ENCODE measurements at regions of chr14 and their contacts with region 1.

Region 1: DNA sequence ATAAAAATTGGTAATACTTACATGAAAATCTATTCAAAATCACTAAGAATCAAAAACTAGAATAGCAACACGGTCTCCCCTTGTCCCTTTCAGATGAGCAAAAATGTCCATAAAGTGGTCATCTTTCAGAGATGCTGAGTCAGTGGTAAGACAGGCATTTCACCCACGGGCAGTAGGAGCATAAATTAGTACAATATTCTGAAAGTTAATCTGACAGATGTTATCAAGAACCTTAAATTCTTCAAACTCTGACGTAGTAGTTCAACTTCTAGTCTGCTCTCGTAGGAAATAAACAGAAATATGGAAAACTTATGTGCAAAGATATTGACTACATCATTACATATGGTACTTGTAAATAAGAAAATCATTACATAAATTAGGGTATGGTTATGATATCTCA is 33.1 kb upstream of the GNPNAT1 start:
- DNase-seq: no peak
- ATAC-seq: no peak
- H3K4me3 ChIP-seq: no peak overlapping the region
- H3K4me3 Mint-ChIP-seq: no peak overlapping the region
- H3K27ac ChIP-seq: no peak overlapping the region
- H3K27ac Mint-ChIP-seq: no peak overlapping the region
- H3K4me1 ChIP-seq: no peaks in the 10 kb centered on the region
- H3K4me1 Mint-ChIP-seq: no peaks in the 10 kb centered on the region
- H3K27me3 ChIP-seq: no peaks in the 10 kb centered on the region
- H3K27me3 Mint-ChIP-seq: peaks cover 4% of the 10 kb centered on the region
- CTCF ChIP-seq: no peak

Region 2: GRCh38 chr14:52219488-52220084 is 604.9 kb before region 1 on chr14:
- CTCF ChIA-PET with region 1: no interaction called
- POLR2A ChIA-PET with region 1: no interaction called
- intact Hi-C with region 1: no loop called
- DNase-seq: no peak
- ATAC-seq: no peak
- H3K4me3 ChIP-seq: no peak overlapping the region
- H3K4me3 Mint-ChIP-seq: no peak overlapping the region
- H3K27ac ChIP-seq: no peak overlapping the region
- H3K27ac Mint-ChIP-seq: no peak overlapping the region
- H3K4me1 ChIP-seq: peaks cover 6% of the 10 kb centered on the region
- H3K4me1 Mint-ChIP-seq: peaks cover 9% of the 10 kb centered on the region
- H3K27me3 ChIP-seq: no peaks in the 10 kb centered on the region
- H3K27me3 Mint-ChIP-seq: no peaks in the 10 kb centered on the region
- CTCF ChIP-seq: no peak

Region 3: DNA sequence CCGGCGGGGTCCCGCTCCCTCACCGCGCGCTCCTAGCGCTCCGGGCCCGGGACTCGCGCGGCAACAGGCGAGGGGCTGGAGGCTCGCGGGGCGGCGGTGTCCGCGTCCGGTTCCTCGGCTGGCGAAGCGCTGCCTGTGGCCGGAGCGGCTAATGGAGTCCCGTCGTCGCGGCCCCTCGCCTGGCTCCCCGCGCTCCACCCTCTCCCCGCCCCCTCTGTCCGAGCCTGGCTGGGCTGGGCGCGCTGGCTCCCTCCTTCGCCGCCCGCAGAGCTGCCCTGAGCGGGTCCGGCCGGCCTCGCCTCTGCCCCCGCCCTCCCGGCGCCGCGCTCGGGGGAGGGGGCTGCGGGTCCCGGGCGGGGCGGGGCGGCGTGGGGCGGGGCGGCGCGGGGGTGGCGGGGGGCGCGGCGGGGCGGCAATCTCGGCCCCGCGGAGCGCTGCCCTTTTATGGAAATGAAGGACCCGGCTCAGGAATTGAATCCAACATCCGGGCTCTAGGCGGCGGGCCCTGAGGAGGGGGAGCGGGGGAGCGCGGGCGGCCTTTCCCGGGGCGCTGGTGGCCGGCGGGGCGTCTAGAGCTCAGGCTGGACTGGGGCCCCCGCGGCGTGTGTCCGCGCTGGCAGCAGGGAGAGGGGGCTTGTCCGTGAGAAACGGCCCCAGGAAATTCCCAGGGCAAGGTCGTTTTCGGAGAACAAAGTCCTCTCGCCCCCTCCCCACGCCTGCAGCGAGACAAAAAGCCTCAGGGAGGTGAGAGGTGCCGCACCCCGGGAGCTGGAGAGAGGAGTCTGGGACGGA is 126.6 kb after region 1 on chr14 and contains the start of gene FERMT2:
- CTCF ChIA-PET with region 1: interaction called, 10 read pairs
- POLR2A ChIA-PET with region 1: no interaction called
- intact Hi-C with region 1: no loop called
- DNase-seq: peak in 4 of 9 experiments; percentile 7 to 29 (median 28)
- ATAC-seq: peak; percentile 48
- H3K4me3 ChIP-seq: peak within 1 kb of the TSS; percentile 50 to 59
- H3K4me3 Mint-ChIP-seq: peak within 1 kb of the TSS; percentile 81
- H3K27ac ChIP-seq: no peak within 1 kb of the TSS
- H3K27ac Mint-ChIP-seq: no peak within 1 kb of the TSS
- H3K4me1 ChIP-seq: peaks cover 20% of the 10 kb centered on the region
- H3K4me1 Mint-ChIP-seq: peaks cover 20% of the 10 kb centered on the region
- H3K27me3 ChIP-seq: peaks cover 29 to 41% of the 10 kb centered on the region in 2 experiments
- H3K27me3 Mint-ChIP-seq: peaks cover 46% of the 10 kb centered on the region
- CTCF ChIP-seq: no peak
- total RNA-seq, gene FERMT2: not detected

Region 4: DNA sequence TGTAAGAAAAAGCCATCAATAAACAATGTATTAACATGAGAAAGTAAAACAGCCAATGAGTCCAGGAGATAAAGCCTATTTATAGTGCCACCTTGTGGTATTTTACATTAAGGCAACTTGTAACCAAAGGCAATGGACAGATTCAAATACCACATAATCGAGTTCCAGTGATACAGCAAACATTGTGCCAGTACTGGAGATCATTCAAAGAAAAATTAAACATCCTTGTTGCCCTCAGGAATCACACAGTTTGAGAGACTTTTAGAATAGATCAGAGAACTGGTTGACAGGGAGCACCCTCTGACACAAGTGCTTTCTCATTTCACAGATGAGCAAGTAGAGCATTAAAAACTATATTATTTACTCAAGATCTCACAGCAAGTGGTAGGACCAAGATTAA is 230.5 kb after region 1 on chr14:
- CTCF ChIA-PET with region 1: interaction called, 8 read pairs
- POLR2A ChIA-PET with region 1: no interaction called
- intact Hi-C with region 1: loop called (anchors 1 kb)
- DNase-seq: peak in 2 of 9 experiments; percentile 48 to 60
- ATAC-seq: peak; percentile 55
- H3K4me3 ChIP-seq: no peak overlapping the region
- H3K4me3 Mint-ChIP-seq: no peak overlapping the region
- H3K27ac ChIP-seq: no peak overlapping the region
- H3K27ac Mint-ChIP-seq: peak overlapping the region; percentile 34
- H3K4me1 ChIP-seq: no peaks in the 10 kb centered on the region
- H3K4me1 Mint-ChIP-seq: no peaks in the 10 kb centered on the region
- H3K27me3 ChIP-seq: no peaks in the 10 kb centered on the region
- H3K27me3 Mint-ChIP-seq: no peaks in the 10 kb centered on the region
- CTCF ChIP-seq: peak; percentile 82

Region 5: GRCh38 chr14:53306267-53306721 is 481.8 kb after region 1 on chr14:
- CTCF ChIA-PET with region 1: interaction called, 7 read pairs
- POLR2A ChIA-PET with region 1: no interaction called
- intact Hi-C with region 1: loop called (anchors 2 kb)
- DNase-seq: peak in 6 of 9 experiments; percentile 13 to 61 (median 36)
- ATAC-seq: peak; percentile 34
- H3K4me3 ChIP-seq: peak overlapping the region; percentile 1 to 17
- H3K4me3 Mint-ChIP-seq: peak overlapping the region; percentile 52
- H3K27ac ChIP-seq: no peak overlapping the region
- H3K27ac Mint-ChIP-seq: no peak overlapping the region
- H3K4me1 ChIP-seq: no peaks in the 10 kb centered on the region
- H3K4me1 Mint-ChIP-seq: peaks cover 4% of the 10 kb centered on the region
- H3K27me3 ChIP-seq: peaks cover 0 to 2% of the 10 kb centered on the region in 2 experiments
- H3K27me3 Mint-ChIP-seq: peaks cover 5% of the 10 kb centered on the region
- CTCF ChIP-seq: peak; percentile 62

Region 6: DNA sequence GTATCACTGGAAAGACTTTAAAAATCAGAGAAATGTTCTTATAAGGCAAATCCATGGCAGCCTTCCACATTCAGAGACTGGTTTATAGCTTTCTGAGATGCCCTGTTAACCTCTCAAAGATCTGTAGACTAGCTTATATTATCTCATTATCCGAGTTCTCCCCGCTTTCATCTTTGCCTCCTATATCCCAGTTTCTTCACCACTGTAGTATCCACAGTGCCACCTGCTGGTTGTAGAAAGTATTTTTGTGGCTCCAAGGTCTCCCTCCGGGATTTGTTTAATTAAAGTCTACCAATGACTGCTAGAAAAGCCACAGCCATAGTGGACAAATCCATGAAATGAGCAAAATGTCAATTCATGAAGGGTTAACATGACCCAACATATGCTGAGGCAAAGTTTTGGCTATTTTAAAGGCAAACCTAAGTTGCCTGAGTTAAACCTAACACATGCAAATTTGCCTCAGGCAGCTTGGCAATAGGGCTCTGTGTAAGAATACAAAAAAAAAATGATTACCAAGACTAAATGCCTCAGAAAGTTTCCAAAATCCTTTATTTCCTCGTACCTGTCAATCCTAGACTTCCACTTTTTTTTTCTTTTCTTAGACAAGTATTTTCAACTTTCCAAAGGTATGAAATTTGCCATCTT is 1350.9 kb after region 1 on chr14:
- CTCF ChIA-PET with region 1: no interaction called
- POLR2A ChIA-PET with region 1: no interaction called
- intact Hi-C with region 1: loop called in 1 of 2 experiments (anchors 10 kb)
- DNase-seq: peak in 5 of 9 experiments; percentile 8 to 52 (median 28)
- ATAC-seq: no peak
- H3K4me3 ChIP-seq: no peak overlapping the region
- H3K4me3 Mint-ChIP-seq: no peak overlapping the region
- H3K27ac ChIP-seq: no peak overlapping the region
- H3K27ac Mint-ChIP-seq: no peak overlapping the region
- H3K4me1 ChIP-seq: no peaks in the 10 kb centered on the region
- H3K4me1 Mint-ChIP-seq: peaks cover 2% of the 10 kb centered on the region
- H3K27me3 ChIP-seq: peaks cover 0 to 4% of the 10 kb centered on the region in 2 experiments
- H3K27me3 Mint-ChIP-seq: peaks cover 19% of the 10 kb centered on the region
- CTCF ChIP-seq: peak; percentile 69

Measured in CD8-positive, alpha-beta T cell (primary cell).